CD8-positive, alpha-beta T cell (primary cell): ENCODE measurements at regions of chr1 and their contacts with region 1.

Region 1: DNA sequence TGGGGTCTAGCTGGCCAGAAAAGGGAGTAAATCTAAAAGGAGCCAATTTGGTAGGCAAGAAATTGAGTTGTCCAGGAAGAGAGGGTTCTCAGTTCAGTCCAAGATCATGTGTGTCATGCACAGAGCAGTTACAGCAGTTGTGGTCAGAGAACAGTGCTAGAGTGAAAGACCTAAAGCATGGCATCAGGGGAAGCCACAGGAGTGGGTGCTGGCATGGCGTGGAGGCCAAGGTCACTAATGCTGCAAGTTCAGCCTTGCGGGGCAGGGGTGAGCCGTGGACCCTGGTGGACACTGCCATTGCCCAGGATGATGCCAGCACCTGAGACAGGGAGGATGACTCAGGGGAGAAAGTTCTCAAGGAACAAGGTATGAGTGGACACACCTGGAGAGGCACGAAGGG is 16.6 kb upstream of the TMEM125 start:
- DNase-seq: peak in 1 of 9 experiments; percentile 38
- ATAC-seq: no peak
- H3K4me3 ChIP-seq: no peak overlapping the region
- H3K4me3 Mint-ChIP-seq: no peak overlapping the region
- H3K27ac ChIP-seq: no peak overlapping the region
- H3K27ac Mint-ChIP-seq: no peak overlapping the region
- H3K4me1 ChIP-seq: no peaks in the 10 kb centered on the region
- H3K4me1 Mint-ChIP-seq: no peaks in the 10 kb centered on the region
- H3K27me3 ChIP-seq: no peaks in the 10 kb centered on the region
- H3K27me3 Mint-ChIP-seq: peaks cover 11% of the 10 kb centered on the region
- CTCF ChIP-seq: no peak

Region 2: GRCh38 chr1:43309405-43310025 is 56.3 kb after region 1 on chr1:
- CTCF ChIA-PET with region 1: no interaction called
- POLR2A ChIA-PET with region 1: no interaction called
- intact Hi-C with region 1: loop called in 1 of 2 experiments (anchors 2 kb)
- DNase-seq: no peak
- ATAC-seq: no peak
- H3K4me3 ChIP-seq: no peak overlapping the region
- H3K4me3 Mint-ChIP-seq: no peak overlapping the region
- H3K27ac ChIP-seq: no peak overlapping the region
- H3K27ac Mint-ChIP-seq: no peak overlapping the region
- H3K4me1 ChIP-seq: no peaks in the 10 kb centered on the region
- H3K4me1 Mint-ChIP-seq: no peaks in the 10 kb centered on the region
- H3K27me3 ChIP-seq: no peaks in the 10 kb centered on the region
- H3K27me3 Mint-ChIP-seq: peaks cover 4% of the 10 kb centered on the region
- CTCF ChIP-seq: no peak